ENCODE measurements at regions of chr11 and their contacts with region 1.

Region 1: GRCh38 chr11:95074806-95075563 is 8.3 kb downstream of the SRSF8 start:
- DNase-seq: no peak
- ATAC-seq: no peak

Region 2: GRCh38 chr11:94958121-94958696 is 116.8 kb before region 1 on chr11:
- intact Hi-C with region 1: no loop called
- DNase-seq: no peak
- ATAC-seq: no peak

Region 3: DNA sequence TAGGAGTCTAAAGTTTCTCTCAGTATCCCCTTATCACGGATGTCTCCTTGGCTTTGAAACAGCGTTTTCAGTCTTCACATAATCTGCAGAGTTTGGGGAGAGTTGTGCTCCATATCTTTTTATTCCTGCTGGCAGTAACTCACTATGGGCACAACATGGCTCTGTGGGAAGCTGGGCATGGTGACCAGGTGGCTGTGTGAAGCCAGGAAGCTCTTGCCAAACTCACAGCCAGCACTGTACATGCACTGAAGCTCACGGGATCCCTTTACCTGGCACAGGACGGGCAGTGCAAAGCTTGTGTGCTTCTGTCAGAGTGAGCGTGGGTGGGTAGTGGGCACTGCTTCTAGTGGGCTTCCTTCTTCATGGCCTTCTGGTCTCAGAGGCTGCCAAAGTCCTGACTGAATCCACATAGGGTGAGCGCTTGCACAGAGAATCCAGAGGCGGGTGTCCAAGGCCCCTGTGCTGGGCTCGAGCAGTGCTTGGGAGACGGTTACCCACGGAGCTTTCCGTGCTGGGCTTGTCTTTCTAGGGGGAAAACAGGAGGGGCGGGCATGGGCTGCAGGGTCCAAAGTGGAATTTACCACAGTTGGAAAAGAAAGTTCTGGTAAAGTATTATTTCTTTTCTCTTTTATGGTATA is 60.7 kb before region 1 on chr11:
- intact Hi-C with region 1: no loop called
- DNase-seq: no peak
- ATAC-seq: no peak

Region 4: DNA sequence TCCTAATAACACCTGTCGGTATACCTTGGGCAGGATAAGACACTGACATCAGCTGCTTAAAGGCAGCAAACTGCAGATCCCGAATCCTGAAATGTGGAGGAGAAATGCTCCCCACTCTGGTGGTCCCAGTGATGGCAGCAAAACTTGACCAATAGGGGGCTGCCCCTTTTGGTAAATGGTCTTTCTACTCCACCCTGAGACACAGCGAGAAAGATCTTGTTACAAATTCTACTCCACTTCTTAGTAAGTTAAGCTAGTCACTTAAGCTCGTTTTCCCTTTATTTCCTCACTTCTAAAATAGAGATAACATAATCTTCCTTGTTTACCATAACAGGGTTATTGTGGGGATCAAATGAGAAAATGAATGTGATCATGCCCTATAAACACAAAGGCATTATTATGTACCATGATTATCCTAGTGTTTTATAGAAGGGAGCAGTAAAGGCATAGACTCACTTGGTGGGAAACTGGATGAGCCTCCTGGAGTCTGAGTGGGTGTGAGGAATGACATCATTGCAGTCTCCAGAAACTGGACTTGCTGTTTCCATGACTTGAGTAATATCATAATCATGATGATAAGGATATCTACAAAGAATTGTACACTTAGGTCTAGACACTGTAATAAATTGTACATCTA is 65.5 kb after region 1 on chr11:
- intact Hi-C with region 1: loop called (anchors 5 kb)
- DNase-seq: no peak
- ATAC-seq: no peak

Region 5: DNA sequence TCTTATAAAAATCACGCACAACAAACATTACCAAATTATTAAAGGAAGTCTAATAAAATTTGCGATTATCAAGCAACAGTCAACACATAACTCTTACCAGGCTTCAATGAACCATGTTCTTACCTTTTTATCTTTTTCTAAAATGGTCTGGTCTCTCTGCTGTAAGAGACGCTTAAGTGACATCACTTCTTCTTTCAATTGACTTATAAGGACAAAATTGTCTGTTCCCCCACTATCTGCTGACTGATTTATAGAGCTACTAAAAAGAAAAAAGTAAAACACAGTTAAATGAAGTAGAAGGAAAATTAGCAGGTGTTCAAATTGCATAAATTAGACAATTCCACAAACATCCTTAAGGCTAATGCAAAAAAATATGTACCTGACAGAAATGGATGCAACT is 703.7 kb after region 1 on chr11:
- intact Hi-C with region 1: no loop called
- DNase-seq: no peak
- ATAC-seq: no peak

Measured in sciatic nerve (tissue), 2 donors.